H1 (cell line): ENCODE measurements at regions of chr1 and their contacts with region 1.

Region 1: DNA sequence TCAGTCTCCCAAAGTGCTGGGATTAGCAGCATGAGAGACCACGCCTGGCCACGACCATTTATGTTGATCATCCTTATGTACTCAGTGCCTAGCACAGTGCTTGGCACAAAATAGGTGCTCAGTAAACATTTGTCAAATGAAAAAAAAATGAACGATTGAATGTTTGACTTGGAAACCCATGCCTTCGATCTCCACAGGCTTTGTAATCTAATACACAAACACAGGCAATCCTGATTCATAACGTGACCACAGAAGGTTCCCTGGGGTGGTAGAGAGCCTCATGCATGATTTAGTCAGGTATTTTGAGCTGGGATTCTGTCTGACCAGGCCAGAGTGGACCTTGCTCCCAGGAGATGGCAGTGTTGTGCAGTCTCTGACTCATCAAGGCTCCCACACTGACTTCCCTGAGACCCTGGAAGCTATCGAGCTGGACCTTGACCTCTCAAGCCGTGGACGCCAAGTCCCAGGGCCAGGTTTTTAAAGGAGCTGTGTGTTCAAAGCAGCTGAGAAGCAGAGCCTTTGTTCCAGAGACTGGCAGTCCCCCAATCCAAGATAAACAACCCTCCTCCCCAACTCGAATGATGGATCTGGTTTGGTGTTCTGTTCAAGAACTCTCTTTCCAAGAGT is 81.1 kb downstream of the PGM1 start:
- DNase-seq: peak; percentile 54 to 79
- H3K4me3 ChIP-seq: no peak overlapping the region
- H3K27ac ChIP-seq: no peak overlapping the region
- H3K4me1 ChIP-seq: peaks cover 0 to 3% (median 0%) of the 10 kb centered on the region in 4 experiments; a peak in 2 of 7 replicates
- H3K27me3 ChIP-seq: 0 out of 7 replicates have a peak, but pooled peaks cover 0 to 2% (median 0%) of the 10 kb centered on the region in 4 experiments
- CTCF ChIP-seq: peak; percentile 83 to 96 (median 88)
- EP300 ChIP-seq: no peak
- POLR2A ChIP-seq: no peak
- RAD21 ChIP-seq: peak; percentile 97 to 98

Region 2: GRCh38 chr1:63563745-63564144 is 110.6 kb before region 1 on chr1:
- CTCF ChIA-PET with region 1: no interaction called
- POLR2A ChIA-PET with region 1: no interaction called
- DNase-seq: no peak
- H3K4me3 ChIP-seq: no peak overlapping the region
- H3K27ac ChIP-seq: no peak overlapping the region
- H3K4me1 ChIP-seq: no peaks in the 10 kb centered on the region
- H3K27me3 ChIP-seq: no peaks in the 10 kb centered on the region
- CTCF ChIP-seq: no peak
- EP300 ChIP-seq: no peak
- POLR2A ChIP-seq: no peak
- RAD21 ChIP-seq: no peak

Region 3: DNA sequence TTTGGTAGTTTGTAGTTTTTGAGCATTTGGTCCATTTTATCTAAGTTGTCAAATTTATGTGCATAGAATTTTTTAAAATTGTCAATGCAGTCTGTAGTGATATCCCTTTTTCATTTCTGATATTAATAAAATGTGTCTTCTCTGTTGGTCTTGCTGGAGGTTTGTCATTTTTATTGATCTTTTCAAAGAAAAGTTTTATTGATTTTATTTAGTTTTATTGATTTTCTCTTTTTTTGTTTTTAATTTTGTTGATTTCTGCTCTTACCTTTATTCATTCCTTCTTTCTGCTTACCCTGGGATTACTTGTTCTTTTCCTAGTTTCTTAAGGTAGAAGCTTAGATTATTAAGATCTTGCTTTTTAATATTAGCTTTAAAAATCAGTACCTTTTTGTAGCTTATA is 89.1 kb before region 1 on chr1:
- CTCF ChIA-PET with region 1: no interaction called
- POLR2A ChIA-PET with region 1: no interaction called
- DNase-seq: no peak
- H3K4me3 ChIP-seq: no peak overlapping the region
- H3K27ac ChIP-seq: no peak overlapping the region
- H3K4me1 ChIP-seq: no peaks in the 10 kb centered on the region
- H3K27me3 ChIP-seq: no peaks in the 10 kb centered on the region
- CTCF ChIP-seq: no peak
- EP300 ChIP-seq: no peak
- POLR2A ChIP-seq: no peak
- RAD21 ChIP-seq: no peak

Region 4: DNA sequence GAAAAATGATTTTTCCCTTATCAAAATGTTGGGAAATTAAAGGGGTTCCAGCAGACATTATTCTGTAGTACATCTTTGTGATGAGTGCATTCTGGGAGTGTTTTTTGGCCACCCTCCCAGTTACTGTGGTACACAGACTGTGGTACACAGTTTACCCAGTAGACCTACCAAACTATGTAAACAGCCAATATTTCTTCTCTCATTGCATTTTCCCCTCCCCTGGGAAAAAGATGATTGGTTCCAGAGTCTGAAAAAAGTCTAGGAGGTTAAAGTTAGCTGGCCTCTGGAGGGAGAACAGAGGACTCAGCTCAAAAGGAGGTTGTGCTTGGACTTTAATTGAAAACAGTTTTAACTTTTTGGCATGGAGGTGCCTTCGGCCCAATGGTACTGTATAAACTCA is 38.7 kb before region 1 on chr1:
- CTCF ChIA-PET with region 1: no interaction called
- POLR2A ChIA-PET with region 1: no interaction called
- DNase-seq: no peak
- H3K4me3 ChIP-seq: no peak overlapping the region
- H3K27ac ChIP-seq: no peak overlapping the region
- H3K4me1 ChIP-seq: no peaks in the 10 kb centered on the region
- H3K27me3 ChIP-seq: no peaks in the 10 kb centered on the region
- CTCF ChIP-seq: no peak
- EP300 ChIP-seq: no peak
- POLR2A ChIP-seq: no peak
- RAD21 ChIP-seq: no peak

Region 5: DNA sequence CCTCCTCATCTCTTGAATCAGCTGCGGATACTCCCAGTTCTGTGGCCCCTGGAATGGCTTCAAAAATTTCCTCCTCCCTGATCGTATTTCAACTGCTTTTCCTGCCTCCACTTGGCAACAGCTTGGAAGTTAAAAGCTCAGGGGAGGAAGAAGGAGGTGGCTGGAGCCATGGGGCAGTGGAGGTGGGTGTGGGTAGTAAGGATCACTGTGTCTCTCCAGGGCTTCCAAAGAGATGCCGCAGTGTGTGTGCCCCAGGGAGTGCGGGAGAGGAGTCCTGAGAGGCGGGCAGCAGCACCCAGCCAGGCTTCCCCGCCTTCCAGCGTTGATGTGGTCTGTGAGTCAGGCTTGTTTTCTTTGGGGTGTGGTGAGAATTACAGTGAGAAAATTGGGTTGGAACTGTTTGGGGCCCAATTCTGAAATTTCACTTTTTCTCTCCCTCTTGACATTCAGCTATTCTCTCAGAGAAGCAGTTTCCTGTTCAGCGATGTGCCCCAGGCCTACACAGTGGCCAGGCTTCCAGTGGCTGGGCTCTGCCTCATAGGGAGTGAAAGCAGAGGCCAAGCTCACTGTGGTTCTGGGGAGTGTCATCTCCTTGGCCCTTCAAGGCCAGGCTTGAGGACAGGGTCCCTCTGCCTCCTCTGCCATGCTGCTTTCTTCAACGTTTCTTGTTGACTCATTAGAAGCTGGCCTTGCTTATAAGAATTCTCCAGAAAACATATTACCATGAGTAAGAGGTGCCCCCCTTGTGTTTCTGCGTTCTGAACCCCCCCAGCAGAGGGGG is 12.1 kb before region 1 on chr1:
- CTCF ChIA-PET with region 1: interaction called, 35 read pairs
- POLR2A ChIA-PET with region 1: no interaction called
- DNase-seq: no peak
- H3K4me3 ChIP-seq: no peak overlapping the region
- H3K27ac ChIP-seq: no peak overlapping the region
- H3K4me1 ChIP-seq: 0 out of 7 replicates have a peak, but pooled peaks cover 0 to 2% (median 0%) of the 10 kb centered on the region in 4 experiments
- H3K27me3 ChIP-seq: no peaks in the 10 kb centered on the region
- CTCF ChIP-seq: no peak
- EP300 ChIP-seq: no peak
- POLR2A ChIP-seq: no peak
- RAD21 ChIP-seq: no peak